HEK293 (cell line): ENCODE measurements at regions of chr1 and their contacts with region 1.

Region 1: DNA sequence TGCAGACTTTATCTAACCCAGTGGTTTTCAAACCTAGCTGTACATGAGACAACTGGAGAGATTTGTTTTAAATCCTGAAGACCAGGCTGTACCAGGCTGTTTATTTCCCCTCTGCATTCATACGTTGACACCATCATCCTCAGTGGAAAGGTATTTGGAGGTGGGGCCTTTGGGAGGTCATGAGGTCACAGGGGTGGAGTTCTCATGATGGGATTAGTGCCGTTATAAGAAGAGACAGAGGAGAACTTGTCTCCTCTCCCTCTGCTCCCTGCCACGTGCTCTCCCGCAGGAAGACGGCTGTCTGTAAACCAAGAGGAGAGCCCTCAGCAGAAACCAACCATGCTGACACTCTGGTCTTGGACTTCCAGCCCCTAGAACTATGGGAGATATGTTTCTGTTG is 165.4 kb downstream of the ADSS2 start:
- H3K4me3 ChIP-seq: no peak overlapping the region
- H3K27ac ChIP-seq: no peak overlapping the region
- H3K4me1 ChIP-seq: no peaks in the 10 kb centered on the region
- CTCF ChIP-seq: no peak

Region 2: GRCh38 chr1:244231572-244232315 is 54.6 kb before region 1 on chr1:
- CTCF ChIA-PET with region 1: no interaction called
- POLR2A ChIA-PET with region 1: no interaction called
- H3K4me3 ChIP-seq: peak overlapping the region; percentile 13
- H3K27ac ChIP-seq: no peak overlapping the region; the same call in 1 of the 2 replicates
- H3K4me1 ChIP-seq: peaks cover 5% of the 10 kb centered on the region
- CTCF ChIP-seq: no peak

Region 3: DNA sequence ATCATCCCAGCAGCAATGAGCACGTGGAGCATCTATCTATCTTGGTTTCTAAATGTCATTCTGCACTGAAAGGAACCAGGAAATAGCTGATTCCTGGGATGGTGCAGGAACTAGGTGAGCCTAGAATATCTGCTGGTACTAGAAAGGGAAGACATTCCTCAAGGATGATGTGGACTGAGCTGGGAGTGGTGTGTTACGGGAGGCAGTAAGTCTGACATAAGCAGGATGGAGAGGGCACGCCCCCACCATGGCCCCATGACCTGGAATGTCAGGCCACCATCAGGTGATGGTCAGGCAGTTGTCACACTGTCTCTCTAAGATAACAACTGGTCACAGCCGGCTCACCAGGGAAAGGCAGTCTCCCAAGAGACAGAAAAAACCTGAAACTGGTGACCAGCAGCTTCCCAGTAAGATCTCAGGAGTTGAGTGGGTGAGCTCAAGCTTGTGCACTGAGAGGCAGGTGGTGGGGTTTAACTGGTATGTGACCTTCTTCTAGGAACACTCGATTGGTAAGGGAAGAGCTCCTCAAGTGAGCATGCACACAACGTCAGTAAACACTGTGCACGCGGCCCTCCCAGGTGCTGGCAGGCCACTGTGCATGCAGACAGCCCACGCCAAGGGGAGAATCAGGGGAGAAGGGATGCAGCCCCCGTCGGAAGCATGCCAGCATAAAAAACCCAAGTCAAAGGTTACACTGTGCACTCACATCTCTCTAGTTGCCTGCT is 16.7 kb after region 1 on chr1:
- CTCF ChIA-PET with region 1: interaction called, 30 read pairs
- POLR2A ChIA-PET with region 1: interaction called, 3 read pairs
- H3K4me3 ChIP-seq: no peak overlapping the region
- H3K27ac ChIP-seq: no peak overlapping the region
- H3K4me1 ChIP-seq: no peaks in the 10 kb centered on the region
- CTCF ChIP-seq: no peak

Region 4: DNA sequence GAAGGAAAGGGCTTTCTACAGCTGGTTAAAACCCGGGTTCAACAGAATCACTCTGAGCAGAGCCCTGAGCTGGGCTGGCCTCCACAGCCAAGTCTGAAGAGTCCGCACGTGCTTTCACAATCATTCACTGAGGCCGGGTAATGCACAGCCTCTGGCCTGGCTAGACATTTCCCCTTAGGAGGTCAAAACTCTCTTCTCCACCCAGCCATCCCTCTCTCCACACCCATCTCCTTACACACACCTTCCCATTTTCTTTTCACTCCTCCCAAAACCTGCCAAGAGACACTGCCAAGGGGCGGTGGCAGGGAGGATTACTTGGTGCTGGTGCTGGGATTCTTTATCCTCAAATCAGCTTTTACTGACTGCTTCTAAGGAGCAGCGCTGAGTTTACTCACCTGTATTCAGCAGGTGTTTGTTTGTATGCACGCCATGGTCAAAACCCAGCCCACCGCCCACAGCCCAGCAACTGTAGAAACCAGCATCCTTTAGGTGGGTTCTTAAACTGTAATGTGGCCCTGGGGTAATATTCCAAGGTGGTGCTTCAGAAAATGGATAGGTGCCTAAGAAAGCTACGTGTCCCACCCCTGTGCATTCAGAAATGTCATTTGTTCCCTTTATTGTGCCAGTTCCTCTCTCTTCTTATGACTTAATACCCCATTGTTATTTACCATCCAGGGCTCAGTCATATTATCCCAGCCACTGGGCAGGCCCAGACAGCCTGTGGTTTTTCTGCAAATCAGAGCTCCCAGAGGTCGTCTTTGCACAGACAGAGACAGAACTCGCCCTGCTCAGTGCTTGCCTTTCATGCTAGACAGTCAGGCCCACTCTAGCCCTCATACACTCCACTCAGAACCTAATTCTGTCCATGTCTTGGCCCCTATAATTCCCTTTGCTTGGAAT is 85.2 kb after region 1 on chr1:
- CTCF ChIA-PET with region 1: no interaction called
- POLR2A ChIA-PET with region 1: no interaction called
- H3K4me3 ChIP-seq: no peak overlapping the region
- H3K27ac ChIP-seq: no peak overlapping the region
- H3K4me1 ChIP-seq: no peaks in the 10 kb centered on the region
- CTCF ChIP-seq: no peak

Region 5: DNA sequence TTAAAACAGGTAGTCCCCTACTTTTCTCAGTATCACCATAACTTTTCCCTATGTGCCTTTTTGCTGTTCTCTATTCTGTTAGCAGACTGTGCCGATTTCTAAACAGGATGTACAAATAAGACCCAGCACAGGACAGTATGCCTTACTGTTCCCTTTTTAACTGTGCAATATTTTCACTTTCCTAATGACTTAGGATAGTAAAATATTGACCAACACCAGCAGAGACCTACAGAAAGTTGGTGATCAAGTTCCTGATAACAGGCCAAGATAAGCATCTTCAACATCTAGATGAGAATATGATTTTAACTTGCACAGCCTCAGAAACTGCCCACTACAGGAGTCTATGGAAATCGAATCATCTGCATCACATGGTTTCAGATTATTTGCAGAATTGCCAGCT is 123.4 kb after region 1 on chr1:
- CTCF ChIA-PET with region 1: no interaction called
- POLR2A ChIA-PET with region 1: no interaction called
- H3K4me3 ChIP-seq: no peak overlapping the region
- H3K27ac ChIP-seq: no peak overlapping the region
- H3K4me1 ChIP-seq: no peaks in the 10 kb centered on the region
- CTCF ChIP-seq: no peak